Activated CD4-positive, alpha-beta memory T cell treated with anti-CD3 and anti-CD28 coated beads, Interleukin-2, amount 10 ng/mL, durations not matched to agents 7 days and 5 days (primary cell): ENCODE measurements at regions of chr11 and their contacts with region 1.

Region 1: DNA sequence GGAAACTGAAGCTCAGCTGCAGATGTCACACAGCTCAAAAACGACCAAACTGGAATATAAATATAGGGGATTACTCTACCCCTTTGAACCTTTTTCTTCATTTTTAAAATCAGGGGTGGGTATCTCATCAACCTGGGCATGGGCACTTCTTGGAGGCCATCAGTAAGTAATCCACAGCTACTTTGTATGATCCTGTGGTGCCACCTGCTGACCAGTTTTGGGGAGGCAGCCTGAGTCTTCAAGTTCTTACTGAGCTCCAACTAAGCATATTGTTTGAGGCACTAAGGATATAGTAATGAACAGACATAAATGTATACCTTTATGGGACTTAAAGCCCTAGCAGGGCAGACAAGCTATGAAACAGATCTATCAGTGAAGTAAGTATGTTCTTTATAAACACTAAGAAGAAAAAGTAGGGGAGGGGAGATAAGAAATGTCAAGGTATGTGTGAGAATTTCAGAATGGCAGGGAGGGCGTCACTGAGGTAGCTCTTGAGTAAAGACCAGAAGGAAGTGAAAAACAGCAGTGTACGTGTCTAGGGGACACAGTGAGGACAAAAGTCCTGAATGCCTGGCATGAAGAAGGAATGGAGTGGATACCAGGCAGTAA is 18.4 kb downstream of the TUB start:
- DNase-seq: peak; percentile 76
- H3K4me3 Mint-ChIP-seq: no peak overlapping the region
- H3K27ac Mint-ChIP-seq: no peak overlapping the region
- H3K4me1 Mint-ChIP-seq: no peaks in the 10 kb centered on the region
- H3K27me3 Mint-ChIP-seq: no peaks in the 10 kb centered on the region

Region 2: DNA sequence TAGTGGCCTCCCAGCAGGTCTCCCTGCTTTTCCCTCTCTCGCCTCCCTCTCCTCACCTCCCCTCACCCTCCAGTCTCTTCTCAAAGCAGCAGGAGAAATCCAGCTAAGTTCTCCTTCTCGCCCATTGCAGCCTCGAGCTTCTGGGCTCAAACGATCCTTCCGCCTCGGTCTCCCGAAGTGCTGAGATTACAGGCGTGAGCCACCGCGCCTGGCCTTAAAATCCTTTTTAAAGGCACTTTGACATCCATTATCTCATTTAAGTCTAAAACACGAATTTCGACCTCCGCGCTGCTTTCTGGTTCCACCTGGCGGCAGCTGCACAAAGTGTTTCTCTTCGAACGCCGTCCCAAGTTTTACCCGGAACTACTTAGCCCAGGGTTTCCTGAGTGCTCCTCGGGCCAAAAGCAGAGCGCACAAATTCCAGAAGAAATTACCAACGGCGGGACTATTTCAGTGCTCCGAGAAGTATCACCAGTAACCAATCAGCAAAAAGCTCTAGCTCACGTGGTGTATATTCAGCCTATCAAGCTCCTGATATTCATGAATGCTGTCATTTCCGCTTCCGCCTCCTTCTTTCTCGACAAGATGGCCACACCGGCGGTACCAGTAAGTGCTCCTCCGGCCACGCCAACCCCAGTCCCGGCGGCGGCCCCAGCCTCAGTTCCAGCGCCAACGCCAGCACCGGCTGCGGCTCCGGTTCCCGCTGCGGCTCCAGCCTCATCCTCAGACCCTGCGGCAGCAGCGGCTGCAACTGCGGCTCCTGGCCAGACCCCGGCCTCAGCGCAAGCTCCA is 112.4 kb before region 1 on chr11 and contains the start of gene EIF3F:
- CTCF ChIA-PET with region 1: interaction called, 17 read pairs
- POLR2A ChIA-PET with region 1: no interaction called
- DNase-seq: peak; percentile 92
- H3K4me3 Mint-ChIP-seq: peak within 1 kb of the TSS; percentile 89
- H3K27ac Mint-ChIP-seq: peak within 1 kb of the TSS; percentile 88
- H3K4me1 Mint-ChIP-seq: peaks cover 41% of the 10 kb centered on the region
- H3K27me3 Mint-ChIP-seq: no peaks in the 10 kb centered on the region
- total RNA-seq, gene EIF3F: 227 to 229 TPM

Region 3: DNA sequence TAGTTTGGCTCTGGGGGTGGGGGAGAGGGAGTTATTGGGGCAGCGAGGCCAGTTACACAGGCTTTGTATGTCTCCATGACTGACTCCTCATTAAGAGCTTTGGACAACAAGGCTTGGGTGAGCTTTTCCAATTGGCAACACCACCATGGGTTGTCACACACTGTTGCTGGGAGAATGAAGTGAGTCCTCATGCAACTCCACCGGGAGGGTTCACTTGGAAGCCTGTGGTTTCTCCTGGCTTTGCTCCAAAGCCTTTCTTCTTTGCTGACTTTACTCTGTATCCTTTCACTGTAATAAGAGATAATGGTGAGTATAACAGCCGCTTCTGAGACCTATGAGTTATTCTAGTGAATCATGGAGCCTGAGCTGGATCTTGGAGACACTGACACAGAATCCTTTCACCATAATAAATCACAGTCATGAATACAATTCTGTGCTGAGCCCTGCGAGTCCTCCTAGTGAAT is 87.4 kb before region 1 on chr11:
- CTCF ChIA-PET with region 1: interaction called, 80 read pairs
- POLR2A ChIA-PET with region 1: no interaction called
- DNase-seq: no peak
- H3K4me3 Mint-ChIP-seq: no peak overlapping the region
- H3K27ac Mint-ChIP-seq: no peak overlapping the region
- H3K4me1 Mint-ChIP-seq: no peaks in the 10 kb centered on the region
- H3K27me3 Mint-ChIP-seq: peaks cover 21% of the 10 kb centered on the region

Region 4: GRCh38 chr11:8018484-8019313 is 80.7 kb before region 1 on chr11:
- CTCF ChIA-PET with region 1: interaction called, 12 read pairs
- POLR2A ChIA-PET with region 1: no interaction called
- DNase-seq: peak; percentile 77
- H3K4me3 Mint-ChIP-seq: peak overlapping the region; percentile 65
- H3K27ac Mint-ChIP-seq: no peak overlapping the region
- H3K4me1 Mint-ChIP-seq: peaks cover 14% of the 10 kb centered on the region
- H3K27me3 Mint-ChIP-seq: peaks cover 49% of the 10 kb centered on the region

Region 5: GRCh38 chr11:8033305-8034105 is 65.9 kb before region 1 on chr11:
- CTCF ChIA-PET with region 1: interaction called, 118 read pairs
- POLR2A ChIA-PET with region 1: no interaction called
- DNase-seq: peak; percentile 45
- H3K4me3 Mint-ChIP-seq: no peak overlapping the region
- H3K27ac Mint-ChIP-seq: no peak overlapping the region
- H3K4me1 Mint-ChIP-seq: no peaks in the 10 kb centered on the region
- H3K27me3 Mint-ChIP-seq: peaks cover 7% of the 10 kb centered on the region

Region 6: DNA sequence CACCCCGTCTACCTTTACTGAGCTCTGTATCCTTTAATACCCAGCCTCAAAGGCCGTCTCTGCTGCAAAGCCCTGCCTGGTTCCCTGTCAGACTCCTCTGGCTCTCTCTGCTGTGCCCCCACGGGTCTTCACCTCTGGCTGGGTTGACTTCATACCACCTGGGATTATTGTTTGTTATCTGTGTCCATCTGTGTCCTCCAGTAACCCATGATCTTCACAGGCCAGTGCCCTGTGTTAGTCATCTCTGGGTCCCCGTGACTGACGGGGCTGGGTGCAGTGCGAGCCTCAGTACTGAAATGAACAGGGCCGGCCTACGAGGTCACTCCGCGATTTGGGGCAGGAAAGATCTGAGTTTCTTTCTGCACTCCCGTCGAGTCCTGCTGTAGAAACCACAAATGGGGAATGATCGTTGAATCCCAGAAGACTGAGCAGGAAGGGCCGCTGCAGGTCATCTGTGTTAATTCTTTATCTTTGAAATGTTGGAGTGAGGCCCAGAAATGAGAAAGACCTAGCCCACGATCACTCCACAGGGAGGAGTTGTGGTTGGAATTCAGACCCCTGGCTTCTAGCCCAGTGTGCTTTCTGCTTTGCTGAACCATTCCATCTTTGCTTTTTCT is 30.7 kb before region 1 on chr11:
- CTCF ChIA-PET with region 1: interaction called, 10 read pairs
- POLR2A ChIA-PET with region 1: no interaction called
- DNase-seq: no peak
- H3K4me3 Mint-ChIP-seq: no peak overlapping the region
- H3K27ac Mint-ChIP-seq: no peak overlapping the region
- H3K4me1 Mint-ChIP-seq: no peaks in the 10 kb centered on the region
- H3K27me3 Mint-ChIP-seq: peaks cover 11% of the 10 kb centered on the region

Region 7: GRCh38 chr11:8229299-8230177 is 130.1 kb after region 1 on chr11:
- CTCF ChIA-PET with region 1: no interaction called
- POLR2A ChIA-PET with region 1: no interaction called
- DNase-seq: no peak
- H3K4me3 Mint-ChIP-seq: no peak overlapping the region
- H3K27ac Mint-ChIP-seq: no peak overlapping the region
- H3K4me1 Mint-ChIP-seq: no peaks in the 10 kb centered on the region
- H3K27me3 Mint-ChIP-seq: no peaks in the 10 kb centered on the region